Body of pancreas (tissue), 4 donors: ENCODE measurements at regions of chr12 and their contacts with region 1.

Region 1: DNA sequence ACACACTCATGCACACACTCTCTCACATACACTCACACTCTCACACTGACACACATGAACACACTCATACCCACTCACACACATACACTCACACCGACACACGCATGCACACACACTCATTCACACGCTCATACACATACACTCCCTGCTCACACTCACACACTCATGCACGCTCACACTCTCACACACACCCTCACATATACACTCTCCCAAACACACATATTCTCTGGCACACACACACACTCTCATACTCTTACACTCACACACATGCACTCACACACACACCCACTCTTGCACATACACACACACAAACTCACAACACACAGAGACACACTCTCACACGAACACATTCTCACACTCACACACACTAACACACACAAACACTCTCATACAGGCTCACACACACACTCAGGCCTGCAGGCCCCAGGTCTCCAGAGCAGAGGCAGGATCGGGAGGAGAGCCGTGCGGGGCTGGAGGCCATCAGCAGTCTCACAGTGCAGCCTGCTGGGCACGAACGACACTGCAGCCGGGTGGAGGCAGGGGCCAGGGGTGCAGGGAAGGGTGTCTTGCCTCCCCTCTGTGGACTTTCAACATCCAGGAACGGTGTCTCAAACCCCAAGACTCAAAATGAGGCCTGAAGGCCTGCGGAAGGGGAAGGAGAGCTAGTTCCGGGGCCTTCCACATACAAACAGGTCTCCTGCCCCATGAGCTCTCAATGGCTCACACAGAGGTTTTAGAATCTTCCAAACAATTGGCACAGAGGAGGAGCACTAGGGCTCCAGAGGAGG is 148.7 kb downstream of the ANO2 start:
- DNase-seq: peak; percentile 51 to 73 (median 62)
- ATAC-seq: peak; percentile 72
- H3K4me3 ChIP-seq: no peak overlapping the region
- H3K27ac ChIP-seq: no peak overlapping the region
- H3K4me1 ChIP-seq: peaks cover 7% of the 10 kb centered on the region
- H3K27me3 ChIP-seq: no peaks in the 10 kb centered on the region
- CTCF ChIP-seq: peak; percentile 42 to 91 (median 68)
- POLR2A ChIP-seq: no peak

Region 2: GRCh38 chr12:5364036-5364770 is 432.2 kb before region 1 on chr12:
- intact Hi-C with region 1: no loop called
- DNase-seq: no peak
- ATAC-seq: no peak
- H3K4me3 ChIP-seq: no peak overlapping the region
- H3K27ac ChIP-seq: no peak overlapping the region
- H3K4me1 ChIP-seq: no peaks in the 10 kb centered on the region
- H3K27me3 ChIP-seq: no peaks in the 10 kb centered on the region
- CTCF ChIP-seq: no peak
- POLR2A ChIP-seq: no peak

Region 3: DNA sequence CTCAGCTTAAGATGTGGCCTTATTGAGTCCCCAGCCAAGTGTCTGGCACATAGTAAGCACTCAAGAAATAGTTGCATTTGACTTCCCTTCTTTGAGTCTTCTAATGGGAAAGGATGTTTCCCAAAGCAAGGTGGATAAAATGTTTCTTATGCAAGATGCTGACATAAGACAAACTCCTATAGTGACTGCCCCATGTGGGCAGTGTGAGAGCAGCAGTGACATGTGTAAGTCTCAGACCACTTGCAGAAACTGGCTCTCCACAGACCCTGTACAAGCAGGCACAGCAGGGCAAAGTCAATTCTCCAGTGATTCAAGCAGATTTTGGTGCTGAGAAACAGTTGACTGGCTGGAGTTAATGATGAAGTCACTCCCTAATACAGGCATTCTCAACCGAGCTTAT is 106.6 kb before region 1 on chr12:
- intact Hi-C with region 1: no loop called
- DNase-seq: no peak
- ATAC-seq: no peak
- H3K4me3 ChIP-seq: no peak overlapping the region
- H3K27ac ChIP-seq: no peak overlapping the region
- H3K4me1 ChIP-seq: no peaks in the 10 kb centered on the region
- H3K27me3 ChIP-seq: no peaks in the 10 kb centered on the region
- CTCF ChIP-seq: no peak
- POLR2A ChIP-seq: no peak

Region 4: DNA sequence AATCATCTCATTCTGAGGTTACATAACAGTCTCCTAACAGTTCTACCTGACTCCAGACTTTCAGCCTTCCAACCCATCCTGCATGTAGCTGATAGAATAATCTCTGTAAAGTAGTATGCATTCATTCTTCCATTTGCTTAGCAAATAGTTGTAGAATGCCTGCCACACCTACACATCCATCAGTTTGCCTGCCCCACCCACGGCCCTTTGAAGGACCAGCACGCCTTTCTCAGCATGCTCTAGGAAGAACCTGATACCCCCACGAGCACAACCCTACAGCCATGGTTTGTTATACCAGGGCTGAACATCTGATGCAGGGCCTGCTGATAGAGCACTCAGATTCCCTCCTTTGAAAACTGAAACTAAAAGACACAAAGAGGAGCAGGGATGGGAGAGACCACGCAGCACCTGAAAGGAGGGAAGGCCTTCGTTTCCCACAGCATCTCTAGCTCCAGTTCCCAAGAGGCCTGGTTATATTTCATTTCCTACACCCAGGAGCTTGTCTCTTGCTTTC is 56.4 kb before region 1 on chr12:
- intact Hi-C with region 1: loop called (anchors 5 kb)
- DNase-seq: no peak
- ATAC-seq: no peak
- H3K4me3 ChIP-seq: no peak overlapping the region
- H3K27ac ChIP-seq: no peak overlapping the region
- H3K4me1 ChIP-seq: no peaks in the 10 kb centered on the region
- H3K27me3 ChIP-seq: no peaks in the 10 kb centered on the region
- CTCF ChIP-seq: no peak
- POLR2A ChIP-seq: no peak